GM12878 (cell line): ENCODE measurements at regions of chr18 and their contacts with region 1.

Region 1: DNA sequence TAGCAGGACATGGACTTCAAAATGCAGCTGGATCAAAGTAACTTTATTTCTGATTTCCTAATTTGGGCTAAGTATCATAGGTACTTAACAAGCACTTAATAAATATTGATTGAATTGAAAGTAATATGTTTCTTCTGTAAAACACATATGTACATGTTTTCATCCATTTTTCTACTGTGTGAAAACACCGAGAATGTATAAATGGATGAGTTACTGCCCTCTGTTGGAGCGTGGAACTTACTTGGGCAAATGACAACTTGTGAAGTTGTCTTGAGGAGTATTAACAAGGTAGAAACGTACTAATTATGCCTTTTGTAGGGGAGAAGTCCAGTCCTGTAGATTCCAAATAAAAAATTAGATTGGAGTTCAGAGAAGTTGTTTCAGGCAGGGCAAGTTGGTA is 87.2 kb downstream of the PHLPP1 start:
- DNase-seq: no peak
- ATAC-seq: 0 out of 3 replicates have a peak, but pooled peaks have one; percentile 19
- H3K4me3 ChIP-seq: no peak overlapping the region
- H3K27ac ChIP-seq: no peak overlapping the region
- H3K4me1 ChIP-seq: no peaks in the 10 kb centered on the region
- H3K27me3 ChIP-seq: no peaks in the 10 kb centered on the region
- CTCF ChIP-seq: peak in 2 of 3 experiments; percentile 18 to 26; a peak in 2 of 6 replicates
- EP300 ChIP-seq: no peak
- POLR2A ChIP-seq: no peak
- RAD21 ChIP-seq: peak; percentile 46; the same call in 1 of the 2 replicates

Region 2: GRCh38 chr18:62790871-62791772 is 11.4 kb before region 1 on chr18:
- CTCF ChIA-PET with region 1: interaction called, 10 read pairs
- POLR2A ChIA-PET with region 1: no interaction called
- RAD21 ChIA-PET with region 1: no interaction called
- SMC1A ChIA-PET with region 1: interaction called, 3 read pairs
- in situ Hi-C with region 1: no loop called
- intact Hi-C with region 1: no loop called
- DNase-seq: no peak
- ATAC-seq: no peak
- H3K4me3 ChIP-seq: no peak overlapping the region
- H3K27ac ChIP-seq: no peak overlapping the region
- H3K4me1 ChIP-seq: no peaks in the 10 kb centered on the region
- H3K27me3 ChIP-seq: no peaks in the 10 kb centered on the region
- CTCF ChIP-seq: no peak
- EP300 ChIP-seq: no peak
- POLR2A ChIP-seq: no peak
- RAD21 ChIP-seq: no peak

Region 3: GRCh38 chr18:62844850-62845643 is 42.5 kb after region 1 on chr18:
- CTCF ChIA-PET with region 1: no interaction called
- POLR2A ChIA-PET with region 1: no interaction called
- RAD21 ChIA-PET with region 1: no interaction called
- SMC1A ChIA-PET with region 1: no interaction called
- in situ Hi-C with region 1: no loop called
- intact Hi-C with region 1: no loop called
- DNase-seq: no peak
- ATAC-seq: peak; percentile 77
- H3K4me3 ChIP-seq: peak overlapping the region; percentile 48; the same call in 1 of the 2 replicates
- H3K27ac ChIP-seq: peak overlapping the region; percentile 59
- H3K4me1 ChIP-seq: peaks cover 17% of the 10 kb centered on the region
- H3K27me3 ChIP-seq: no peaks in the 10 kb centered on the region
- CTCF ChIP-seq: no peak
- EP300 ChIP-seq: no peak
- POLR2A ChIP-seq: no peak
- RAD21 ChIP-seq: no peak